ENCODE measurements at regions of chr14 and their contacts with region 1.

Region 1: DNA sequence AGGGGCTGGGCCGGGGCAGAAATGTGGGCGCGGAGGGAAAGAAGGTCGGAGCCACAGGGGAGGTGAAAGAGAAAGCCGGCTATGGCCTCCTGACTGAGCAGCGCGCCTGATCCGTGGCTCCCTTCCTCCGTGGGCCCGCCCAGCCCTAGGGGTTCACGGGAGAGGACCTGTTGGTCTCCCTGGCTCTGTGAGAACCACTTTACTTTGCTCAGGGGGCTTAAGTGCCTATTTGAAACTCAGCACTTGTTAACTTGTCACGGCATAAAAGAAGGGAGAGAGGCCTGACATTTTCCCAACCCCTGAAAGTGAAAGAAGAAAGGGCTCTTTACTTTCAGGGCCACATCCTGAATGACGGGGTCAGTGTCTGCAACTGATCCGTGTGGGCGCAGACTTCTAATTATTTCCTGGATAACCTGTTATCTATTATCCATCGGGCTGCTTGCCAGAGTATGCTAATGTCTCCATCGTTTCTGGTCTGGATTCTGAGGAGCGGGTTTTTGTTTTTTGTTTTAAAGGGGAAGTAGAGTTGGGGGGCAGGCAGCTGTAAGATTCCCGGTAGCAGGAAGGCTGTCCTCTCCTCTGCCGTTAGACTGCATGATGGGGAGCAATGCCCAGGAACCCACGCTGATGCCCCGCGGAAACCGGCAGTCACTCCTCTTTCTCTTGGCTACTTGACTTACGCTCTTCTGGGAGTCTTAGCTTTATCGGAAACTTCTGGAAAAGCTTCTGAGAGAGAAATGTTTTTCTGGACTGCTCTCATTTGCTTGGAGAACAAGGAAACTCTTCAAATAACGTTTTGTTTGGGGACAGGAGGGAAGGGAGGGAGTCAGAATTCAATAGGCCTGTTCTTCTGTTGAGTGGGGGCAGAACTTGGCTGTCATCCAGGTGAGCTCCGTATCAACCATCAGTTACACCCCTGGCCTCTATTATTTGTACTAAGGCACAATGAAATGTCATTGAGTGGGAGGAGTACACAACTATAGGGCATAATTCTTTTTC is 127.7 kb upstream of the MAX start:
- DNase-seq: peak in 9 of 10 donors; percentile 54 to 93 (median 80)

Region 2: GRCh38 chr14:65070455-65070976 is 159.5 kb before region 1 on chr14:
- intact Hi-C with region 1: no loop called
- DNase-seq: peak in 1 of 10 donors; percentile 33

Region 3: GRCh38 chr14:65170768-65171507 is 59.1 kb before region 1 on chr14:
- intact Hi-C with region 1: loop called (anchors 5 kb)
- DNase-seq: peak in 9 of 10 donors; percentile 25 to 94 (median 63)

Region 4: DNA sequence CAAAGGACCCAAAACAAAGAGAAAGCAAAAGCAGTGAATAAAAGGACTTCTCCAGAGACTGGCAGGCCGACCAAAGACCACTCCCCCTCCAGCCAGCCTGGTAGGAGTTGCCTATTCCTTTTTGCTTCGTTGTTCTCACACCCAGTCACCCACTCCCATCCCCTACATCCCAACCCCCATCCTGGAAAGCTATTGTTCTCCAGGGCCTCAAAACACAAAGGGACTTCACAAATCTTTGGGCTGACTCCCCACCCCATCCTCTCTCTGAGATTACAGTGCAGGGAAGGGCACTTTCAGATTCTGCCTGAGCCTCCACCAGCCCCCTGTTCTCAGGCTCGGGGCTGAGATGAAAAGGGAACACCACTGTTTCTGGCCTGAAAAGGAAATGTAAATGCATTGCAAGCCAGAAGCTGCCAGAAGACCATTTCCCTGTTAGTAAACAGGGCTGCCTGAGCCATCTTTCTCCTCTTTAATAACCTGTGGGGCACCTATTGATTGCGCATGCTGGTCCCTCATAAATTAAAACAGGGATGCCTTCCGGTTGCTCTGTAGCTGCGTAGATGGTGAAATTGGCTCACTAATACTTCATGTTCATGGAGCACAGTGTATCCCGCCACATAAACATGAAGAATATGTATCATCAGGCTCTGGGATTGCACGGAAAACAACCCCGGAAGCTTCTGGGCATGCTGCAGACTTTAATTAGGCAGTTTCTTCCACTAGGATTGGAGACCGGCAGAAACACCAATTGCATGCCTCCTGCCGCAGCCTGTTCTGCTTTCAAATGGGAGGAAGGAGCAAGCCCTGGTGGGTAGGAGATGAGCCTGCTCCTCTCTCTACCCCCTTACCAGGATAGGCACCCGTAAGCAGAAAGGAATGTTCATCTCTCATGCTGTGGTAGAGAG is 52.2 kb after region 1 on chr14:
- intact Hi-C with region 1: loop called (anchors 5 kb)
- DNase-seq: peak in 8 of 10 donors; percentile 61 to 95 (median 73)

Region 5: DNA sequence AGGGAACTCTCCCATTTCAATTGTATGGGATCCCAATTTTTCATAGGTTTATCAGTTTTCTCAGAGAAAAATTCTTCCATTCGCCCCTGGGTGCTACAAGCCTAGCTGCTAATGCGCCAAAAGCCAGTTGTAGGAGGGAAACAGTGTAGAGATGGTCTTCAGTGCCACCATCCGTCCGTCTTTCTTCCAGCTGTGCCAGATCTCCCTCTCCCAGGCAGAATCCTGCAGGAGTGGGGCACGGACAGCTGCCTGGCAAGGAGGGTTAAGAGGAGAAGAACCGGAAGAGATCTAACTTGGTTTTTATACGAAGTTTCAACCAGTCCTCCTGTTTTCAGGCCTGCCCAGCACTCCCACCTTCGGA is 143.6 kb after region 1 on chr14:
- intact Hi-C with region 1: loop called (anchors 5 kb)
- DNase-seq: peak in 8 of 10 donors; percentile 14 to 93 (median 46)